K562 (cell line): ENCODE measurements at regions of chr5 and their contacts with region 1.

Region 1: GRCh38 chr5:141618804-141619554 is at the start of gene DIAPH1:
- DNase-seq: peak; percentile 94 to 98 (median 95)
- ATAC-seq: peak; percentile 90
- H3K4me3 ChIP-seq: peak within 1 kb of the TSS; percentile 97
- H3K27ac ChIP-seq: peak within 1 kb of the TSS; percentile 89
- H3K4me1 ChIP-seq: peaks cover 0 to 3% of the 10 kb centered on the region in 2 experiments; a peak in 3 of 5 replicates
- H3K27me3 ChIP-seq: no peaks in the 10 kb centered on the region
- CTCF ChIP-seq: peak; percentile 95 to 97 (median 95)
- EP300 ChIP-seq: 0 out of 2 replicates have a peak, but pooled peaks have one; percentile 50
- POLR2A ChIP-seq: no peak
- RAD21 ChIP-seq: peak; percentile 97 to 100
- polyA plus RNA-seq, gene DIAPH1: 75.8 to 97.8 TPM

Region 2: DNA sequence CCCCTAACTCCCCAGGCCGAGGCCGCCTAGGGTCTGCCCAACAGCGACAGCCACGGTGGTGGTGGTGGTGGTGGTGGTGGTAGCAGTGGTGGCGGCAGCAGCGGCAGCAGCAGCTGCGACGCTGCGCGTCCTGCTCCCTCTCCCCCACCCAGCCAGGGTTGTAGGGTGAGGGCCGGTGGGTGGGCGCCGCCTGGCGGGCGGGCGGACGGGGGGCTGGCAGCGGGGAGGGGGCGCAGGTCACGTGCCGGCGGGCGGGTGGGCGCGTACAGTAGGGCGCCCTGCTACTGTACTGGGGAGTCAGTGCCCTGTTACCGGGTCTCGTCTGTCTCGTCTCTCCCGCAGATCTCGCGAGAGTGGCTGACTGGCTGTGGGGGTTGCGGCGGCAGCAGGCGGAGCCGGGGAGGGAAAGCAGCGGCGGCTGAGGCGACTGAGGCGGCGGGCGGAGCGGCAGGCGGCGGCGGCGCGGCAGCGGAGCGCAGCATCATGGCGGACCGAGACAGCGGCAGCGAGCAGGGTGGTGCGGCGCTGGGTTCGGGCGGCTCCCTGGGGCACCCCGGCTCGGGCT is 1505.2 kb before region 1 on chr5 and contains the start of gene PURA:
- CTCF ChIA-PET with region 1: no interaction called
- POLR2A ChIA-PET with region 1: no interaction called
- in situ Hi-C with region 1: no loop called
- intact Hi-C with region 1: loop called (anchors 10 kb)
- DNase-seq: peak; percentile 93 to 95 (median 94)
- ATAC-seq: peak; percentile 82
- H3K4me3 ChIP-seq: peak within 1 kb of the TSS; percentile 65
- H3K27ac ChIP-seq: peak within 1 kb of the TSS; percentile 78
- H3K4me1 ChIP-seq: peaks cover 28 to 30% of the 10 kb centered on the region in 2 experiments
- H3K27me3 ChIP-seq: no peaks in the 10 kb centered on the region
- CTCF ChIP-seq: peak in 2 of 3 experiments; percentile 2 to 23; a peak in 2 of 6 replicates
- EP300 ChIP-seq: no peak
- POLR2A ChIP-seq: no peak; the same call in 1 of the 2 replicates
- RAD21 ChIP-seq: no peak
- polyA plus RNA-seq, gene PURA: 3.2 to 4.2 TPM

Region 3: DNA sequence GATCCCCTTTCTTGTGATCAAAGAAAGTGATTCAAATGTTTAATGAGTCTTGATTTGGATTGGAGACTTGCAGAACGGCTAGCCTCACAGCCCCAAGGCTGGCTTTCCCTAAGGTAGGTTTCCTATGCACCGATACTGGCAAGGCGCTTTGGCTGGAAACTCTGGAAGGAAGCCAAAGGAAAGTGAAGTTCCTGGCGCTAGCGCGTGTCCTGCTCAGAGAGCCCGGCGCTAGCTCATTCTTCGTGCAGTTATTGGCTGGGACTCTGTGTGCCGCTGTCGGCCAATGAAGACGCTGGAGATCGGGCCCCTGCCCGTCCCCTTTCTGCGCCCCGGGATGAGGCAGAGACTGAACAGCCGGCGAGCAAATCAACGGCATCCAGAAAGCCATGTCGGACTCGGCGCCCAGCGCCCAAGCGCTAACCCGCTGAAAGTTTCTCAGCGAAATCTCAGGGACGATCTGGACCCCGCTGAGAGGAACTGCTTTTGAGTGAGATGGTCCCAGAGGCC is 143.3 kb before region 1 on chr5 and contains the start of gene PCDHGC3:
- CTCF ChIA-PET with region 1: no interaction called
- POLR2A ChIA-PET with region 1: no interaction called
- in situ Hi-C with region 1: no loop called
- intact Hi-C with region 1: no loop called
- DNase-seq: peak in 2 of 4 experiments; percentile 16 to 34
- ATAC-seq: peak; percentile 82
- H3K4me3 ChIP-seq: no peak within 1 kb of the TSS
- H3K27ac ChIP-seq: no peak within 1 kb of the TSS
- H3K4me1 ChIP-seq: peaks cover 0 to 14% of the 10 kb centered on the region in 2 experiments; a peak in 1 of 5 replicates
- H3K27me3 ChIP-seq: peaks cover 20 to 32% of the 10 kb centered on the region in 2 experiments; a peak in 4 of 5 replicates
- CTCF ChIP-seq: no peak; a peak in 1 of 6 replicates
- EP300 ChIP-seq: no peak
- POLR2A ChIP-seq: no peak
- RAD21 ChIP-seq: peak in 1 of 2 experiments; percentile 28; a peak in 1 of 4 replicates
- polyA plus RNA-seq, gene PCDHGC3: not detected

Region 4: GRCh38 chr5:141557681-141558136 is 61.3 kb before region 1 on chr5:
- CTCF ChIA-PET with region 1: no interaction called
- POLR2A ChIA-PET with region 1: no interaction called
- in situ Hi-C with region 1: no loop called
- intact Hi-C with region 1: no loop called
- DNase-seq: peak; percentile 50 to 78 (median 54)
- ATAC-seq: peak; percentile 86
- H3K4me3 ChIP-seq: no peak overlapping the region
- H3K27ac ChIP-seq: peak overlapping the region; percentile 67; the same call in 2 of the 3 replicates
- H3K4me1 ChIP-seq: no peaks in the 10 kb centered on the region; a peak in 1 of 5 replicates
- H3K27me3 ChIP-seq: no peaks in the 10 kb centered on the region
- CTCF ChIP-seq: peak; percentile 68 to 82 (median 76)
- EP300 ChIP-seq: no peak
- POLR2A ChIP-seq: no peak
- RAD21 ChIP-seq: peak; percentile 61 to 71

Region 5: GRCh38 chr5:141598391-141599350 is 20.3 kb before region 1 on chr5:
- CTCF ChIA-PET with region 1: interaction called, 57 read pairs
- POLR2A ChIA-PET with region 1: interaction called, 25 read pairs
- in situ Hi-C with region 1: no loop called
- intact Hi-C with region 1: no loop called
- DNase-seq: no peak
- ATAC-seq: peak; percentile 36
- H3K4me3 ChIP-seq: no peak overlapping the region
- H3K27ac ChIP-seq: 0 out of 3 replicates have a peak overlapping the region, but pooled peaks have one; percentile 11
- H3K4me1 ChIP-seq: peaks cover 6 to 33% of the 10 kb centered on the region in 2 experiments; a peak in 3 of 5 replicates
- H3K27me3 ChIP-seq: no peaks in the 10 kb centered on the region
- CTCF ChIP-seq: no peak
- EP300 ChIP-seq: no peak
- POLR2A ChIP-seq: no peak
- RAD21 ChIP-seq: no peak

Region 6: GRCh38 chr5:141605523-141606277 is 13.3 kb before region 1 on chr5:
- CTCF ChIA-PET with region 1: no interaction called
- POLR2A ChIA-PET with region 1: interaction called, 17 read pairs
- in situ Hi-C with region 1: no loop called
- intact Hi-C with region 1: loop called (anchors 2 kb)
- DNase-seq: peak in 3 of 4 experiments; percentile 17 to 93 (median 73)
- ATAC-seq: peak; percentile 86
- H3K4me3 ChIP-seq: no peak overlapping the region
- H3K27ac ChIP-seq: peak overlapping the region; percentile 86
- H3K4me1 ChIP-seq: peaks cover 9 to 54% of the 10 kb centered on the region in 2 experiments; a peak in 4 of 5 replicates
- H3K27me3 ChIP-seq: no peaks in the 10 kb centered on the region
- CTCF ChIP-seq: no peak
- EP300 ChIP-seq: peak; percentile 98
- POLR2A ChIP-seq: no peak
- RAD21 ChIP-seq: peak in 1 of 2 experiments; percentile 18; a peak in 1 of 4 replicates

Region 7: GRCh38 chr5:141636413-141637122 is 17.6 kb after region 1 on chr5 and contains the starts of genes HDAC3 and RELL2:
- CTCF ChIA-PET with region 1: no interaction called
- POLR2A ChIA-PET with region 1: interaction called, 13 read pairs
- in situ Hi-C with region 1: no loop called
- intact Hi-C with region 1: loop called (anchors 2 kb)
- DNase-seq: peak; percentile 91 to 96 (median 92)
- ATAC-seq: peak; percentile 89
- H3K4me3 ChIP-seq: peak within 1 kb of the TSS; percentile 91
- H3K27ac ChIP-seq: peak within 1 kb of the TSS; percentile 84
- H3K4me1 ChIP-seq: peaks cover 46 to 52% of the 10 kb centered on the region in 2 experiments
- H3K27me3 ChIP-seq: no peaks in the 10 kb centered on the region
- CTCF ChIP-seq: no peak
- EP300 ChIP-seq: no peak
- POLR2A ChIP-seq: peak; percentile 74
- RAD21 ChIP-seq: no peak
- polyA plus RNA-seq, gene HDAC3: 89.7 to 107 TPM
- polyA plus RNA-seq, gene RELL2: 0.06 to 0.76 TPM